SK-N-SH (cell line): ENCODE measurements at regions of chr2 and their contacts with region 1.

Region 1: GRCh38 chr2:43484323-43484930 is 111.4 kb downstream of the THADA start:
- DNase-seq: peak; percentile 48
- H3K4me3 ChIP-seq: no peak overlapping the region
- H3K27ac ChIP-seq: peak overlapping the region; percentile 10 to 81; a peak in 3 of 4 replicates
- H3K4me1 ChIP-seq: peaks cover 0 to 15% of the 10 kb centered on the region in 2 experiments; a peak in 2 of 4 replicates
- H3K27me3 ChIP-seq: no peaks in the 10 kb centered on the region
- CTCF ChIP-seq: peak; percentile 86
- EP300 ChIP-seq: no peak
- RAD21 ChIP-seq: peak; percentile 94

Region 2: GRCh38 chr2:42944779-42945415 is 539.5 kb before region 1 on chr2:
- CTCF ChIA-PET with region 1: interaction called, 83 read pairs
- POLR2A ChIA-PET with region 1: no interaction called
- DNase-seq: peak; percentile 56
- H3K4me3 ChIP-seq: no peak overlapping the region
- H3K27ac ChIP-seq: no peak overlapping the region
- H3K4me1 ChIP-seq: peaks cover 1 to 3% of the 10 kb centered on the region in 2 experiments; a peak in 2 of 4 replicates
- H3K27me3 ChIP-seq: no peaks in the 10 kb centered on the region
- CTCF ChIP-seq: no peak
- EP300 ChIP-seq: no peak
- RAD21 ChIP-seq: no peak

Region 3: GRCh38 chr2:43219383-43220228 is 264.8 kb before region 1 on chr2:
- CTCF ChIA-PET with region 1: interaction called, 61 read pairs
- POLR2A ChIA-PET with region 1: no interaction called
- DNase-seq: peak; percentile 87
- H3K4me3 ChIP-seq: peak overlapping the region; percentile 95 to 97
- H3K27ac ChIP-seq: peak overlapping the region; percentile 94 to 95
- H3K4me1 ChIP-seq: peaks cover 46 to 69% of the 10 kb centered on the region in 2 experiments; a peak in 3 of 4 replicates
- H3K27me3 ChIP-seq: no peaks in the 10 kb centered on the region
- CTCF ChIP-seq: no peak
- EP300 ChIP-seq: peak; percentile 13 to 47; a peak in 1 of 4 replicates
- RAD21 ChIP-seq: peak; percentile 42

Region 4: GRCh38 chr2:43276962-43277391 is 207.4 kb before region 1 on chr2:
- CTCF ChIA-PET with region 1: interaction called, 45 read pairs
- POLR2A ChIA-PET with region 1: no interaction called
- DNase-seq: peak; percentile 56
- H3K4me3 ChIP-seq: no peak overlapping the region
- H3K27ac ChIP-seq: peak overlapping the region; percentile 42 to 95; a peak in 3 of 4 replicates
- H3K4me1 ChIP-seq: peaks cover 39 to 58% of the 10 kb centered on the region in 2 experiments
- H3K27me3 ChIP-seq: no peaks in the 10 kb centered on the region
- CTCF ChIP-seq: no peak
- EP300 ChIP-seq: no peak; a peak in 1 of 4 replicates
- RAD21 ChIP-seq: no peak

Region 5: DNA sequence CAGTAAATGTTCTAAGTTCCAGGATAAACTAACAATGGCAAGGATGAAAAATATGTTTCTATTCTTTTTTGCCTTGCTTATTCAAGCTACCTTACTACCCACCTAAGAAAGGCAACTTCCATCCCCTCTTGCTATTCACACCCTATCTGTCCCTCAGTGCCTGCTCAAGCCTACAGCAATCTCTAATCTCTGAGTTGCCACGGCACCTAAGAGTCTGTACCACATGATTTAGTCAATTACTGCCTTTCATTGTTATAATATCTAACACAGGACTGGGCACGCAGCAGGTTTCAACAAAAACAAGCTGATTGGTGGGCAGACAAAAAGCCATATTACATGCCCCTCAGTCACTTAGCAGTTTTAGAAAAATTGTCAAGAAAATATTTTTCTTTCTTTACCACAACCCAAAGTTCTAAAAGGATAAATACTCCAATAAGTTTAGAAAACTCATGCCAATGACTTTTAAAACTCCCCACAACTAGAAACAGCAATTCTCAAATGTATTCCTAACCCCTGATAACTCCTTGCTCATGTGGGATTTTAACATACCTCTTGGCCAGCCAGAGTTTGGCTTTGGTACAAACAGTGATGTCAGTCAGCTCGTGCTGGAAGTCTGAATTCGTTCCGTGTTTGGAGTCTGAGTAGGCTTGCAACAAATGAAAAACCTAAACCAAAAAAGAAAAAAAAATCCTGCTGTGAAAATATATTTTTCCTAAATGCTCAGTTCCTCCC is 140.7 kb before region 1 on chr2:
- CTCF ChIA-PET with region 1: interaction called, 70 read pairs
- POLR2A ChIA-PET with region 1: no interaction called
- DNase-seq: no peak
- H3K4me3 ChIP-seq: no peak overlapping the region
- H3K27ac ChIP-seq: peak overlapping the region; percentile 76 to 100
- H3K4me1 ChIP-seq: peaks cover 45 to 75% of the 10 kb centered on the region in 2 experiments
- H3K27me3 ChIP-seq: no peaks in the 10 kb centered on the region
- CTCF ChIP-seq: no peak
- EP300 ChIP-seq: peak; percentile 11 to 50; a peak in 2 of 4 replicates
- RAD21 ChIP-seq: no peak; the same call in 1 of the 2 replicates

Region 6: DNA sequence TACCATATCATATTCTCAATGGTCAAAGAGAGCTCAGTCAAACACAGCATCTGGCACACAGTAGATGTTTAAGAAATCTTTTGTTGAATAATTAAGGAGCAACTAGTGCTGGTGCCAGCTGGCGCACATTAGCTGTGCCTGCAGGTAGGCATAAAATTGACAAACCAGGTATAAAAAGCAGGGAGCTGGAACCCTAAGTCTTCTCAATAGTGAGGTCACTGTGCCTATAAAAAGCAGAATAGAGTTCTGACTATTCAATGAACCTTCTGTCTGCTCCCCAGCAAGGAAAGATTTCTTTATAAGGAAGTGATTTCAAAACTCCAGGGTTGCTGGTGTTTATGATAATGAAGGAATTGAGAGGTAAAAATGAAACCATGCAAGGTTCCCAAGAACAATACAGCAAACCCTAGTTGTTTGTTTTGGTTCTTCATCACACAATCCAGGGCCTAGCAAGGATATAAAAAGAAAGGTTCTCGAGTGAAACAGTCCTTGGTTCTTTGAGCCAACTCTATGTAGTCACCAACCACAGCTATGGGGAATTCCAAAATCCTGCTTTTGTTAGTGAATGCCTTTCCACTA is 35.3 kb after region 1 on chr2:
- CTCF ChIA-PET with region 1: interaction called, 11 read pairs
- POLR2A ChIA-PET with region 1: no interaction called
- DNase-seq: no peak
- H3K4me3 ChIP-seq: no peak overlapping the region
- H3K27ac ChIP-seq: peak overlapping the region; percentile 2 to 80; a peak in 3 of 4 replicates
- H3K4me1 ChIP-seq: peaks cover 14 to 16% of the 10 kb centered on the region in 2 experiments; a peak in 3 of 4 replicates
- H3K27me3 ChIP-seq: no peaks in the 10 kb centered on the region
- CTCF ChIP-seq: no peak
- EP300 ChIP-seq: no peak
- RAD21 ChIP-seq: no peak

Region 7: DNA sequence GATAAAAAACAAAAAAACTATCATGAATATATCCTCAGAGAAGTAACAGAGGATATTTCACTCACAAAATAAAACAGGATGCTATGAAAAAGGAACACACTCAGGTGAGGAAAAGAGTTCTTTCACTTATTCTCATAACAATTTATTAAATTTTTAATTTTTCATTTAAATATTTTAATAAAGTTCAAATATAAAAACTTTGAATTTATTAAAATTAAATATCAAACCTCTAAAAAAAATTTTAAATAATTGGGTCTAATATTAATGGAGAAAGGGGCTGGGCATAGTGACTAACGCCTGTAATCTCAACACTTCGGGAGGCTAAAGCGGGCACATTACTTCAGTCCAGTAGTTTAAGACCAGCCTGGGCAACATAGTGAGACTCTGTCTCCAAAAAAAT is 101.3 kb after region 1 on chr2:
- CTCF ChIA-PET with region 1: no interaction called
- POLR2A ChIA-PET with region 1: no interaction called
- DNase-seq: no peak
- H3K4me3 ChIP-seq: no peak overlapping the region
- H3K27ac ChIP-seq: no peak overlapping the region
- H3K4me1 ChIP-seq: no peaks in the 10 kb centered on the region
- H3K27me3 ChIP-seq: no peaks in the 10 kb centered on the region
- CTCF ChIP-seq: no peak
- EP300 ChIP-seq: no peak
- RAD21 ChIP-seq: no peak